ENCODE measurements at regions of chr5 and their contacts with region 1.

Region 1: GRCh38 chr5:108260117-108260857 is 121.6 kb downstream of the FBXL17 start:
- DNase-seq: peak; percentile 54 to 62 (median 57)
- H3K4me3 ChIP-seq: no peak overlapping the region
- H3K4me3 Mint-ChIP-seq: peak overlapping the region in 2 of 8 donors; percentile 33 to 35
- H3K27ac ChIP-seq: no peak overlapping the region
- H3K27ac Mint-ChIP-seq: peak overlapping the region in 1 of 7 donors; percentile 11
- H3K4me1 ChIP-seq: no peaks in the 10 kb centered on the region
- H3K4me1 Mint-ChIP-seq: peaks cover 5 to 12% (median 8%) of the 10 kb centered on the region in 4 donors
- H3K27me3 ChIP-seq: no peaks in the 10 kb centered on the region
- H3K27me3 Mint-ChIP-seq: no peaks in the 10 kb centered on the region

Region 2: GRCh38 chr5:108271127-108271526 is 10.8 kb after region 1 on chr5:
- CTCF ChIA-PET with region 1: interaction called, 44 read pairs
- POLR2A ChIA-PET with region 1: no interaction called
- intact Hi-C with region 1: no loop called
- DNase-seq: no peak
- H3K4me3 ChIP-seq: no peak overlapping the region
- H3K4me3 Mint-ChIP-seq: no peak overlapping the region
- H3K27ac ChIP-seq: no peak overlapping the region
- H3K27ac Mint-ChIP-seq: no peak overlapping the region
- H3K4me1 ChIP-seq: no peaks in the 10 kb centered on the region
- H3K4me1 Mint-ChIP-seq: peaks cover 4 to 12% (median 7%) of the 10 kb centered on the region in 4 donors
- H3K27me3 ChIP-seq: no peaks in the 10 kb centered on the region
- H3K27me3 Mint-ChIP-seq: no peaks in the 10 kb centered on the region

Region 3: DNA sequence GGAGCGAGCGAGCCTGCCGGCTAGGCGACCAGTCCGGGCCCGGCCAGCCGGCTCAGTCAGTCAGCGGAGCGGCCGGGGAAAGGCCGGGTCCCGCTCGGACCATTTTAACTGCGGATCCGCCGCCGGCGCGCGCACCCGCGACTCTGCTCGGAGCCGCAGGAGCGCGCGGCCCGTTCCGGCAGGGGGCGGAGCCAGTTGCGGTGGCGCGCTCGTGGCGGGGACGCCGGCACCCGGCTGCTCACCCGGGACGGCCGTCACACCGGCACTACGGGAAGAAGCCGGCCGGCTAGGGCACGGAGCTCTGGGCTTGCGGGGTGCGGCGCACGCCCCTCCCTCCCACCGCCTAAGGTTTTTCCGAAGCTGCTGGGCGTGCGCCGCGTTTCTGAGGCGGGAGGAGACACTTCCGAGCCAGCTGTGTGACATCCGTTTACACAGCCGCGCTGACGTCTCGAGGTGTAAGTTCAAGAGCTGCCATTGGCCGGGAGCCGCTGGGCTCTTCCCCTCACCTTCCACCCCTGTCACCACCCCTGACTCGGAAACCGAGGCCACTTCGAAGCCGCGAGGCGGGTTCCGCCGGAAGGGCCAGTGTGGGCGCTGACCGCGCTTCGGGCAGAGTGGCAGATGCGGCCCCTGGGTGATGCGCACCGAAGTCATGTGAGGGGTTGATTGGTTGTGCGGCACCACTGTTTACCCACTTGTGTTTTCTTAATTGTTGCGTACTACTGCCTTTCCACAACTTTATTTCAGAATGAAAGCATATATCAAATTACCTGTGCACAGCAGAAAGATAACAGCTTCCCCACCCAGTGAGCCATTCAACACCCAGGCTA is 121.9 kb after region 1 on chr5 and contains the start of gene FBXL17:
- CTCF ChIA-PET with region 1: interaction called, 10 read pairs
- POLR2A ChIA-PET with region 1: no interaction called
- intact Hi-C with region 1: no loop called
- DNase-seq: peak; percentile 92 to 96 (median 94)
- H3K4me3 ChIP-seq: peak within 1 kb of the TSS; percentile 71 to 82
- H3K4me3 Mint-ChIP-seq: peak within 1 kb of the TSS; percentile 86 to 98 (median 90)
- H3K27ac ChIP-seq: peak within 1 kb of the TSS; percentile 91
- H3K27ac Mint-ChIP-seq: peak within 1 kb of the TSS; percentile 87 to 99 (median 98)
- H3K4me1 ChIP-seq: peaks cover 36% of the 10 kb centered on the region
- H3K4me1 Mint-ChIP-seq: peaks cover 25 to 47% (median 34%) of the 10 kb centered on the region in 4 donors
- H3K27me3 ChIP-seq: no peaks in the 10 kb centered on the region
- H3K27me3 Mint-ChIP-seq: no peaks in the 10 kb centered on the region
- total RNA-seq, gene FBXL17: 23.3 to 27.5 TPM

Measured in CD4-positive, alpha-beta memory T cell (primary cell).